OCI-LY7 (cell line): ENCODE measurements at regions of chr3 and their contacts with region 1.

Region 1: DNA sequence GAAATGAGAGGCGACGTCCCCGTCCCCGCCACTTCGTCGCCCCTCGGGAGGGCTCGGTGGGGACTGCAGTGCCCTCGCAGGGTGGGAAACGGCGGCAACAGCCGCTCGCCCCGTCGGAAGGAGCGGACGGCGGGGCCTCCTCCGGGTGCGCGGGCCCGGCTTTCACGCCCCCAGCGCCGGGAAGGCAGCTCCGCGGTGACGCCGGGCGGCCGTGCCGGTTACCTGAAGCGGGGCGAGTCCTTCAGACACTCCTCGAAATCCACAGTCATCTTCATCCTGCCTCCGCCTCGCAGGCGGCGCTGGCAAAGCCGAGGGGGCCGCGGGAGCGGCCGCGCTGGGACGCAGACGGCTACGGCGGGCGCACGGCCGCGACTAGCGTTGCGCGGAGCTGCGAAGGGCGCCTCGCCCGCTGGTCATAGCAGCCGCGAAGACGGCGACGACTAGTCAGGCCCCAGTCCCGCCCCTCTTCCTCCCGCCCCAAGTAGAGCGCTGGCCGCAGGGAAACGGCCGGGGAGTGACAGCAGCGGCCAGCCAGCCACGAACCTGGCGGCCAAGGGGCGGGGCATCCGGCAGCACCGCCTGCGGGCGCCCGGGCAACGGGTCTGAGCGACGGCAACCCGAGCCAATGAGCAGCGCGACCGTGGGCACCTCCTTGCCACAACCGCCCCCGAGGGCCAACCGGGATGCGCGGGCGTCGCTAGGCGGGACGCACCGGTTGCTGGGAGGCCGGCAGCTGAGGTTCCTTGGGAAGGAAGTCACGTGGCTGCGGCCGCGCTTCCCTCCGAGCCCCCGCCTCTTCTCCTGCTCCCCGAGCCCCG is at the start of gene ACAP2:
- DNase-seq: peak; percentile 99
- H3K4me3 ChIP-seq: peak within 1 kb of the TSS; percentile 79
- H3K27ac ChIP-seq: peak within 1 kb of the TSS; percentile 85
- H3K4me1 ChIP-seq: peaks cover 57% of the 10 kb centered on the region
- CTCF ChIP-seq: no peak; the same call in 1 of the 2 replicates
- total RNA-seq, gene ACAP2: 43.9 and 60.8 TPM in 2 replicates

Region 2: GRCh38 chr3:195154793-195155535 is 287.8 kb before region 1 on chr3:
- CTCF ChIA-PET with region 1: no interaction called
- POLR2A ChIA-PET with region 1: no interaction called
- intact Hi-C with region 1: loop called (anchors 5 kb)
- DNase-seq: peak; percentile 73
- H3K4me3 ChIP-seq: peak overlapping the region; percentile 19
- H3K27ac ChIP-seq: peak overlapping the region; percentile 95
- H3K4me1 ChIP-seq: peaks cover 78% of the 10 kb centered on the region
- CTCF ChIP-seq: no peak

Region 3: DNA sequence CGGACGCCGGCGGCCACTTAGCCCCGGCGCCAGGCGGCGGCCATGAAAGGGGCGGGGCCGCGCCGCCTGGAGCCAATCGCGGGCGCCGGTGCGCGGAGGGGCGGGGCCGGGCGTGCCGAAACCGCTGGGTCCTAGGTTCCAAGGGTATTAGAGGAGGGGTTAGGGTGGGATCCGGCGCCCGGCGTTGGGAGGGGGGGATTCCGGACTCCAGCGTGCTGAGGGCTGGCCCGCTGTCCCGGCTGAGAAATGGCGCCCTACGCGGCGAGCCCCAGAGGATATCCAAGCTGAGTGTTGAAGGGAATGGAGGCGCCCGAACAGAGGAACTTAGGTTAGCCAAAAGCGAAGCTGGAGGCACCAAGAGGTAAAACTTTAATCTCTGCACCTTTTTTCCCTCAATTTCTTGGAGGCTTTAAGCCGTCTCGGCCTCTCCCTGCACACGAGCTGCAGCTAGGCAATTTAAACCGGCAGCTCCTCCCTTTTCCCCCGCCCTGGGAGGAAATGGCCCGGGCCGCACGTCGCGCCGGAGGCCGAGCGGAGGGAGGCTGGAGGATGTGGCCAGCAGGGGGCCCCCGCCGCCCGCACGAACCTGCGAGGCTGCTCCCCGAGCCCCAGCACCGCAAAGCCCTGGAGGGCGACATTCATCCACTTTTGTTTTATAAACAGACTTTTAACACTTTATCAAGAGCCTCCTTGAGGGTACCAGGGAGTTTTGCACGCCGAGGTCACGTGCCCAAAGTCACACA is 171.5 kb before region 1 on chr3 and contains the start of gene XXYLT1:
- CTCF ChIA-PET with region 1: interaction called, 4 read pairs
- POLR2A ChIA-PET with region 1: interaction called, 5 read pairs
- intact Hi-C with region 1: loop called (anchors 1 kb)
- DNase-seq: peak; percentile 93
- H3K4me3 ChIP-seq: peak within 1 kb of the TSS; percentile 79
- H3K27ac ChIP-seq: peak within 1 kb of the TSS; percentile 77
- H3K4me1 ChIP-seq: peaks cover 24% of the 10 kb centered on the region
- CTCF ChIP-seq: peak; percentile 99
- total RNA-seq, gene XXYLT1: 16.2 and 19.6 TPM in 2 replicates

Region 4: DNA sequence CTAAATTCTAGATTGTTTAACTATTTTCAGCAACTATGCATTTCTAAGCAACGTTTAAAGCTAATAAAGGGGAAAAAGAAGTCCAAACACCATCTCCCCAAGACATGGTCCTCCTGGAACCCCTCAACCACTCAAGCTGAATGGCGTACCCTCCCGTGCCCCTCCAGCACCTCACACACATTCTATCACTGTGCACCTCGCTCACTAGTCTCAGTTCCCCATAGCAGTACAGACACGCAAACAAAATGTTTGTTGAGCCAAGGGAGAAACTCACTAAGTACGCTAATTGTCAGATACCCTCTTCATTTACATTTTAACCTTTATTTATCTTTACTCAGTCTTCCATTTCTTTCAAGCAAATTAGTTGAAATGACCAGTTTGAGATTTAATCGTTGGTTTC is 48.8 kb before region 1 on chr3:
- CTCF ChIA-PET with region 1: no interaction called
- POLR2A ChIA-PET with region 1: interaction called, 11 read pairs
- intact Hi-C with region 1: no loop called
- DNase-seq: peak; percentile 26
- H3K4me3 ChIP-seq: no peak overlapping the region
- H3K27ac ChIP-seq: no peak overlapping the region
- H3K4me1 ChIP-seq: peaks cover 29% of the 10 kb centered on the region
- CTCF ChIP-seq: no peak

Region 5: GRCh38 chr3:195542698-195543499 is 100.1 kb after region 1 on chr3 and contains the start of gene PPP1R2:
- CTCF ChIA-PET with region 1: no interaction called
- POLR2A ChIA-PET with region 1: interaction called, 4 read pairs
- intact Hi-C with region 1: loop called (anchors 1 kb)
- DNase-seq: peak; percentile 95
- H3K4me3 ChIP-seq: peak within 1 kb of the TSS; percentile 89
- H3K27ac ChIP-seq: peak within 1 kb of the TSS; percentile 89
- H3K4me1 ChIP-seq: peaks cover 59% of the 10 kb centered on the region
- CTCF ChIP-seq: no peak
- total RNA-seq, gene PPP1R2: 239 and 294 TPM in 2 replicates

Region 6: DNA sequence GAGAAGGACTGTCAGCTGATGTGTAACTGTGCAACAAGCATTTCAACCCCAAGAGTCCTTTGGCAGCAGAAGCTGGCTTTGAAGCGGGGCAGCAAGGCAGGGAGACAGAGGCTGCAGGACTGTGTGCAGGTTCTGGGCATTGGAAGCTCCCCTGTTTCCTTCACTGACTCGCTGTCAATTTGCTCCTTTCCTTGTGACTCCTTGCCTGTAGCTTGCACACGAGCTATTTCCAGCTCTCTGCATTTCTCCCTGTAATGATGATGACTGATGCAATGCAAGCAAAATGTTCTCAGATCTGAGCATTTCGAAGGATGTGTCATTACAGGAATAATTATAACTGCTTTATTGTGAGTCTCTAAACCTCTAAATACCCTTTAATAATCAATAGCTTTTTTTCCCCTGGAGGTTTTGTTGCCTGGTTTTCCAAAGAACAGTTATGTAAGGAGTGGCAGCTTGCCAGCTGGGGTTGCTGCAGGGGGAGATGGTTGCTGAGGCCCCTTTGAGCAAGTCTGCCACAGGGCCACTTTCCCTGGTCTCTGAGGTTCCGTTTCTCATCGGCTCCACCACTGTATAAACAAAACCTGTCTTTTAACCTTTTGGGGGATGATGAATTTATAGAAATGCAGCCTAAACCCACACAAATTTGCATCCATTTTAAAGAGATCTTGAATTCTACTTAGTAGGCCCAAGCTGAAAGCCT is 138.1 kb after region 1 on chr3:
- CTCF ChIA-PET with region 1: no interaction called
- POLR2A ChIA-PET with region 1: no interaction called
- intact Hi-C with region 1: no loop called
- DNase-seq: no peak
- H3K4me3 ChIP-seq: no peak overlapping the region
- H3K27ac ChIP-seq: no peak overlapping the region
- H3K4me1 ChIP-seq: peaks cover 3% of the 10 kb centered on the region
- CTCF ChIP-seq: no peak